Activated CD4-positive, alpha-beta T cell treated with anti-CD3 and anti-CD28 coated beads, Interleukin-2, amount 10 ng/mL, durations not matched to agents 7 days and 5 days (primary cell): ENCODE measurements at regions of chr9 and their contacts with region 1.

Region 1: GRCh38 chr9:73132034-73132776 is 19.5 kb upstream of the ANXA1 start:
- DNase-seq: peak; percentile 82
- H3K4me3 Mint-ChIP-seq: peak overlapping the region; percentile 80
- H3K27ac Mint-ChIP-seq: peak overlapping the region; percentile 94
- H3K4me1 Mint-ChIP-seq: peaks cover 30% of the 10 kb centered on the region
- H3K27me3 Mint-ChIP-seq: no peaks in the 10 kb centered on the region

Region 2: DNA sequence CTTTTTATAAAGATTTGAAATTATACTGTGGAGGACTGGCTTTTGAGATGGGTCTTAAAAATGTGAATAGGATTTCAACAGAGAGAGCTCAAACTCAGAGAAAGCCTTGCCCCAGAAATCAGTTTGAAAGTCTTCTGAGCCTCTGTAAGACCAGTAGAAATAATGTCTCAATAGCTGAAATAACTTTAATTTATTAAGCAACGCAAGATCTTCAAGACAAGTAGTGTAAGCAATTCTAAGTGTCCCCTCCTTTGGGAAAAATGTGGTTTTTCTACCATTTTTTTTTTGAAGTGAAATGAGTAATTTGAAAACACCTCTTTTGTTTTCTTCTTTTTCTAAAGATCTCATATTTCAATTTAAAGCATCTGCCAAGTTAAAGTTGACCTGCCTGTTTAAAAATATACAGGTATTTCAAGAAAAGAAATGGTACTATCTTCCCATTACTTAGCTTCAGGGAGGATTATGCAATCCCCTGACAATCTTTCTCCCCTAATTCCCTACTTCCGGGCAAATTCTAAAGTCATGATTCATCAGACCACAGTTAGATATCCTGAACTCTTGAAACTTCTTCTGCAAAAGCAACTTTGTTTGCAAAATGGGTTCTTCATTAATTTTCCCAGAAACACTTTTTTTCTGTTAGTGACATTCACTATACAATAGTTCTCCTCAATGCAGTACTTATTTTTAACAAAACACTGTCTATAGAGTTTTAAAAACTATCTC is 11.6 kb after region 1 on chr9:
- CTCF ChIA-PET with region 1: interaction called, 11 read pairs
- POLR2A ChIA-PET with region 1: no interaction called
- DNase-seq: no peak
- H3K4me3 Mint-ChIP-seq: no peak overlapping the region
- H3K27ac Mint-ChIP-seq: no peak overlapping the region
- H3K4me1 Mint-ChIP-seq: peaks cover 27% of the 10 kb centered on the region
- H3K27me3 Mint-ChIP-seq: no peaks in the 10 kb centered on the region

Region 3: GRCh38 chr9:73380411-73380810 is 248.2 kb after region 1 on chr9:
- CTCF ChIA-PET with region 1: no interaction called
- POLR2A ChIA-PET with region 1: no interaction called
- DNase-seq: no peak
- H3K4me3 Mint-ChIP-seq: no peak overlapping the region
- H3K27ac Mint-ChIP-seq: no peak overlapping the region
- H3K4me1 Mint-ChIP-seq: no peaks in the 10 kb centered on the region
- H3K27me3 Mint-ChIP-seq: no peaks in the 10 kb centered on the region